ENCODE measurements at regions of chr1 and their contacts with region 1.

Region 1: DNA sequence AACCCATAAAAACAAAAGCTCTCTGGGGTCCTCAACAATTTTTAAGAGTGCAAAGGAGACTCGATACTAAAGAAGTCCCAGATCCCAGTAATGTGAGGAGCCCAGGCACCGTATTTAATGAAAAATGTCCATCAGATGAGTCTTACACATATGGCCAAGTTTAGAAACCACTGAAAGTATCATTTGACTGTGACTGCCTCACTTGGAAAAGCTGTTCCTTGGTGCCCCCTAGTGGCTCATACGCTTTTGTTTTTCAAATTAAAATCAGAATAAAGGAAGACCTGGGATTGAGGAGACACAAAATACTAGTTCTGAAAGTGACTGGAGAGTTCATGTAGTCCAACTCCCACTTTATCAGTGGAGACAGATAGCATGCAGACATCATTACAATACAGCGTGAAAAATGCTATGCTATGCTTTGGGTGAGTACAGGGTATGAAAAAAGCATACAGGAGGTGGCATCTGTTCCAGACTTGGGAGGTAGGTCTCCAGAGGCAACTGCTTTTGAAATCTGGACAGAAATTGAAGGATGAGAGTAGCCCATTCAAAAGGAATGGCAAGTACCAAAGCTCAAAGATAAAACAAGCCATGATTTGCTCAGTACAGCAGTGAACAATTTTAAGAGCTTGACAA is 33.8 kb downstream of the GDAP2 start:
- DNase-seq: peak; percentile 78
- H3K4me3 ChIP-seq: no peak overlapping the region
- H3K27ac ChIP-seq: no peak overlapping the region
- H3K4me1 ChIP-seq: no peaks in the 10 kb centered on the region
- CTCF ChIP-seq: peak; percentile 96

Region 2: DNA sequence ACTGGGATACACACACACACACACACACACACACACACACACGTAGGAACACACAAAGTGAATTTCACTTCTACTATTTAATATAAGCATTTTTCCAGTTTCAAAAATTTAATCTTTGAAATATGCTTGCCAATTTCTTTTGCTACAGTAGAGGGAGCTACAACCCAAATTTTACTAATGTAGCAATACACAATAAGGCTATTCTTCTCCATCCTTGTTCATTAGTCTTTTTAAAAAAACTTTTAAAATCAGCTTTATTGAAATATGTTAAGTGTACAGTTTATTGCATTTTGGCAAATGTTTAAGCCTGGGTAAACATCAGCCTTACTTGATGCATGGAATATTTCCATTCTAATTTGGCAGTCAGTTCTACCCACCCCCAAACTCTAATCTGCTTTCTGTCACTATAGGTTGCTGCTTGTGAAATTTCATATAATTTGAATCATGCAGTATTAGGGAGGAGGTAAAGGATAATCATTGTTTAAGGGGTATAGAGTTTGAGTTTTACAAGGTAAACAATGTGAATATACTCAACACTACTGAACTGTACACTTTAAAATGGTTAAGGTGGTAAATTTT is 382.8 kb before region 1 on chr1:
- CTCF ChIA-PET with region 1: no interaction called
- POLR2A ChIA-PET with region 1: no interaction called
- intact Hi-C with region 1: loop called (anchors 2 kb)
- DNase-seq: peak; percentile 52
- H3K4me3 ChIP-seq: no peak overlapping the region
- H3K27ac ChIP-seq: no peak overlapping the region
- H3K4me1 ChIP-seq: no peaks in the 10 kb centered on the region
- CTCF ChIP-seq: peak; percentile 92

Region 3: GRCh38 chr1:117710710-117711109 is 184.9 kb before region 1 on chr1:
- CTCF ChIA-PET with region 1: no interaction called
- POLR2A ChIA-PET with region 1: no interaction called
- intact Hi-C with region 1: no loop called
- DNase-seq: peak; percentile 45
- H3K4me3 ChIP-seq: no peak overlapping the region
- H3K27ac ChIP-seq: no peak overlapping the region
- H3K4me1 ChIP-seq: no peaks in the 10 kb centered on the region
- CTCF ChIP-seq: peak; percentile 80

Region 4: GRCh38 chr1:117758444-117759316 is 136.9 kb before region 1 on chr1:
- CTCF ChIA-PET with region 1: no interaction called
- POLR2A ChIA-PET with region 1: no interaction called
- intact Hi-C with region 1: loop called (anchors 2 kb)
- DNase-seq: peak; percentile 89
- H3K4me3 ChIP-seq: no peak overlapping the region
- H3K27ac ChIP-seq: no peak overlapping the region
- H3K4me1 ChIP-seq: peaks cover 5% of the 10 kb centered on the region
- CTCF ChIP-seq: peak; percentile 95

Measured in OCI-LY7 (cell line).